ENCODE measurements at regions of chr1 and their contacts with region 1.

Region 1: GRCh38 chr1:201703621-201704439 is 125.1 kb upstream of the IPO9 start:
- DNase-seq: peak; percentile 79 to 98 (median 90)

Region 2: DNA sequence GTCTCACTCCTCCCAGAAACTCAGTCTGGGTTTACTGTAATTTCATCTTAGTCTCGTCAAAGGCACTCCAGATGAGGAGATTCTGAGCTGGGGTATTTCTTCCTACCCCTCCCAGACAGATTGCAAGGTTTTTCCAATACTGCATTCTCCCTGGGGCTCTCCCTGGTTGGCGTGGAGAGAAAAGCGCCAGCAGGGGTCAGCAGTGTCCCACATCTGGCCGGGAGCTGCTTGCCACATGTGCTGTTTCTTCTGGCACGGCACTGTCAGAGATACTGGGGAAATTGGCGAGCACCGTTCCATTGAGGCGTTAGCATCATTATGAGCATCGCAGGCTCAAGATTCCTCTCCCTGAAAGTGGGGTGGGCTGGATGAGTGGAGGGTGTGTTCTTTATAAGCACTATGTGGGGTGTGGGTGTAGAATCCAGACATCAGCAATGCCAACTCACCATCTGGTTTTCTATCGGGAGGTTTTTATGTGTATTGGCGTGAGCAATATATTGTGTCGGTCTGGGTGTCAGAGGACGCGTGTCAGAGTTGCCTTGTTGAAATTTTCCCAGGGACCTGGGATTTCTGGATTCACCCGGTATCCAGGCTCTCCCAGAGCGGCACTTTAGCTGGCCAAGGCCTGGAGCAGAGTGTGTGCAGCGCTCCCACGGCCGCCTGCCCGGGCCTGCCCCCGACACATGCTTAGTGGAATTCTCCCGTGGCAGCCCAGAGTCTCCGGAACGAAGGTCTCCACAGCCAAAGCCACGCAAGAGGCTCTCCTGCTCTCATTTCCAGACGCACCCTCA is 172.9 kb before region 1 on chr1:
- intact Hi-C with region 1: loop called (anchors 1 kb)
- DNase-seq: peak; percentile 76 to 98 (median 88)